ENCODE measurements at regions of chr2 and their contacts with region 1.

Region 1: DNA sequence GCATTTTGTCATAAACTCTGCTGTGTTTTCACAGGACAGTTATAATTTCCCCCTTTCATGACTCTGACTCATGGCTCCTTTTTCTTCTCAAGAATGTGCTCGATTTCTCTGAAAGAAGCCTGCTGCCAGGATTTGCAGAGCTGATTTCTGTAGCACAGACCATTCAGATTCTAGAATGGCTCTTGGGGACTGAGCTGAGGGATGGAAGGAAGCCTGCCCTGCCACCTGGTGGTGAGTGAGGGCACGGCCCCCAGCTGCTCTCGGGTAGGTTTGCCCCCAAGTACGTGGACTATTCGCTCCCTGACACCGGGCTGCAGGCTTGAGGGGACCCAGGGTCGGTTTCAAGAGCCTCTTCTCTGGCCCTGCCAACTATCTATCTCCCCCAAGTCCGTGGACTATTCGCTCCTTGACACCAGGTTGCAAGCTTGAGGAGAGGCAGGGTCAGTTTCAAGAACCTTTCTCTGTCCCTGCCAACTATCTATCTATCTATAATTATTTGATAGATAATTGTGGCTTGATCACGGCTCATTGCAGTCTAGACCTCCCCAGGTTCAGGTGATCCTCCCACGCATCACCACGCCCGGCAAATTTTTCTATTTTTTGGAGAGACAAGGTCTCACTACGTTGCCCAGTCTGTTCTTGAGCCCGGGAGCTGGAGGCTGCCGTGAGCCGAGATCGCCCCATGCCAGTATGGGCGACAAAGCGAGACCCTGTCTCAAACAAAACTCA is 1.4 kb upstream of the SMYD5 start:
- DNase-seq: peak; percentile 55
- H3K4me3 Mint-ChIP-seq: no peak overlapping the region
- H3K27ac Mint-ChIP-seq: no peak overlapping the region
- H3K4me1 Mint-ChIP-seq: peaks cover 31% of the 10 kb centered on the region
- H3K27me3 Mint-ChIP-seq: peaks cover 3% of the 10 kb centered on the region

Region 2: GRCh38 chr2:73112913-73113633 is 99.5 kb before region 1 on chr2 and contains the start of gene RAB11FIP5:
- intact Hi-C with region 1: loop called (anchors 1 kb)
- DNase-seq: peak; percentile 81
- H3K4me3 Mint-ChIP-seq: peak within 1 kb of the TSS; percentile 84
- H3K27ac Mint-ChIP-seq: peak within 1 kb of the TSS; percentile 46
- H3K4me1 Mint-ChIP-seq: peaks cover 25% of the 10 kb centered on the region
- H3K27me3 Mint-ChIP-seq: peaks cover 14% of the 10 kb centered on the region
- total RNA-seq, gene RAB11FIP5: 12.1 and 12.9 TPM in 2 replicates

Region 3: DNA sequence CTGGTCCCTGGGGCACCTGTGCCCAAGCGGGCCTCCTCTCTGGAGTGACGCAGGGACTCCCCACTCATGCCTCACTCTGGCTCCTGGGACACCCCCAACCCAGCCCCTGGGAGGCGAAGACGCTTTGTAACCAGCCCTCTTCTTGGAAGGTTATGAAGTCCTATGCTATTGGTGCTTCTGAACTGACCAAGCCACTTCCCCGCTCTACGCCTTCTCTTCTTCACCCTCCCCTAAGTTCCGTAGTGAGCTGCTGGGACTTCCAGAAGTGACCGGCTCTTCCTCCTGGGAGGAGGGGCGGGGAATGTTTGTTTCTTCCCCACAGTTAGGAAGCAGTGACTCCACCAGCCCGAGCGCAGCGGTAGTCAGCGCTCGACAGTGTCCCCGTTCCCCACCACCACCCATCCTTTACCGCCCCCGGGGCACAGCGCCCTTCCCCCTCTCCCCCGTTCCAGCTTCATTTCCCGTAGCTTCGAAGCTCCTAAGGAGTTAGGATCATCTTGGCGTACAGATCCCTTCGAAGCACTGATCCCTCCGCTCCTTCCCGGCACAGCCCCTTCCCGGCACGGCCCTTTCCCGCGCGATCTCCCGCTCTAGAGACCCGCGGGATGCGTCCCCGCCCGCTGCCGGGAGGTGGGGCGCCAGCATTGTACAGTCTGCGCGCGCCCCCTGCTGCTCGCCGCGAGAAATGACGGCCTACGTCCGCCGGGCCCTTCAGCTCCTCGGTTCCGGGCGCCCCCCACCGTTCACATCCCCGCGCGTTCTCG is 35.5 kb before region 1 on chr2:
- intact Hi-C with region 1: loop called (anchors 1 kb)
- DNase-seq: peak; percentile 77
- H3K4me3 Mint-ChIP-seq: peak overlapping the region; percentile 84
- H3K27ac Mint-ChIP-seq: peak overlapping the region; percentile 50
- H3K4me1 Mint-ChIP-seq: peaks cover 26% of the 10 kb centered on the region
- H3K27me3 Mint-ChIP-seq: peaks cover 50% of the 10 kb centered on the region

Region 4: GRCh38 chr2:73293534-73294171 is 81.0 kb after region 1 on chr2 and contains the start of gene EGR4:
- intact Hi-C with region 1: loop called (anchors 1 kb)
- DNase-seq: peak; percentile 91
- H3K4me3 Mint-ChIP-seq: peak within 1 kb of the TSS; percentile 75
- H3K27ac Mint-ChIP-seq: peak within 1 kb of the TSS; percentile 63
- H3K4me1 Mint-ChIP-seq: peaks cover 14% of the 10 kb centered on the region
- H3K27me3 Mint-ChIP-seq: peaks cover 72% of the 10 kb centered on the region
- total RNA-seq, gene EGR4: 1.9 TPM in 2 replicates

Region 5: DNA sequence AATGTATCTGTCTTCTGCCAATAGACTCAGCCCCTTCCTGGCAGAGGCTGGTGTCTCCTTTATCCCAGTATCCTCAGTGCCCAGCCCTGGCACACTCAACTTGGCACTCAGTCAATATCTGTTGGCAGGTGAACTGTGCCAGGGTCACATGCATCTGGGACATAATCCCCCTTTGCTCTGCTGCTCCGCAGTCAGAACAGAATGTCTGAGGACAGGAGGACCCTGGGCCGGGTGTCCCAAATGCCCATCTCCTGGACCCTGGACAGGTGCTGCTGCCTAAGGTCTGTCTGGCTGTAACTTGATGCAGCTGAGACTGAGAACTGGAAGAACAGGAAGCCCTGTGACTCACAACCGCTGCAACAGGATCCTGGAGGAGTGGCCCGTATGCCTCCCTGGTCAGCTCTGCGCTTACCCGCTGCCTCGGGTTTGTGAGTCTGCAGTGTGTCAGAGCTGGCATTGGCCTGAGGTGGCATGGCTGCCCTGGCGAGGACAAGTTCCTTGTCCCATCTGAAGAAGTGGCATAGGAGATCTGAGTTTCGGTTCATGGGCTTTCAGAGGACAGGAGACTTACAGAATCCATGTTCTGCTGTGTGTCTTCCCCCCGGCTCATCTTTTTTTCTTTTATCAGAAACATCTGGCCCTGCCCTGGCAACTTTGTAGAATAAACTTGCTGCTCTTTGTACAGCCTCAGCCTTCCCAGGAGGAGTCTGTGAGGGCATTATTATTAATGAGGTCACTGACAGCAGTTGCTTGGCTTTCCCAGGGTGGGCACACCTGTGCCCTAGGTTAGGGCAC is 1632.8 kb after region 1 on chr2:
- intact Hi-C with region 1: loop called (anchors 2 kb)
- DNase-seq: peak; percentile 26
- H3K4me3 Mint-ChIP-seq: peak overlapping the region; percentile 62
- H3K27ac Mint-ChIP-seq: peak overlapping the region; percentile 49
- H3K4me1 Mint-ChIP-seq: peaks cover 97% of the 10 kb centered on the region
- H3K27me3 Mint-ChIP-seq: no peaks in the 10 kb centered on the region

Measured in activated T-helper 1 cell treated with anti-CD3 and anti-CD28 coated beads, Interleukin-12 subunit alpha, Interleukin-12 subunit beta, Interleukin-2, Interleukin-4 antibody, amounts not matched to agents 30 ng/mL and 10 ng/mL and 1 ng/mL, durations not matched to agents 14 hours and 24 hours and 36 hours (primary cell).